ENCODE measurements at regions of chr9 and their contacts with region 1.

Region 1: GRCh38 chr9:121634329-121635261 is 16.8 kb upstream of the DAB2IP start:
- DNase-seq: peak; percentile 46 to 58
- ATAC-seq: peak; percentile 85 to 93
- H3K4me3 ChIP-seq: no peak overlapping the region
- H3K27ac ChIP-seq: peak overlapping the region in 1 of 2 experiments; percentile 37; a peak in 1 of 6 replicates
- H3K4me1 ChIP-seq: peaks cover 23% of the 10 kb centered on the region
- CTCF ChIP-seq: peak; percentile 72
- EP300 ChIP-seq: no peak
- POLR2A ChIP-seq: no peak
- RAD21 ChIP-seq: peak; percentile 81 to 84

Region 2: DNA sequence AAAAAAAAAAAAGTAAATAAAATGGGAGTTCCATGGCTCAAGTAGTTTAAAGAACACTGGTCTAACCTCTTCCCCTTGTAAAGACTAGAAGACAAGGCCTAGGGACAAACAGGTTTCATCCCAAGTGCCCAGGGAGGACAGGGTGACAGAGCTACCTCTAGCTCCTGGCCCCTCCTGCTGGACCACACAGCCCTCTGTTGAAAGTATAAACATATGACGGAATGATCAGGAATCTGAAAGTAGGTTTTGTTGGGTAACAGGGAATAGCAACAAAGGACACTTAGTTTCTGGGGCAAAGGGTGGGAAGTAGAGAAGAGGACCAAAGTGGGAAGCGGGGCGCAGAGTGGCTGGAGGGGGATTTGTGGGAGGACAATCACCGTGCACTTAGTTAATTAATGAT is 50.2 kb before region 1 on chr9:
- CTCF ChIA-PET with region 1: no interaction called
- POLR2A ChIA-PET with region 1: no interaction called
- DNase-seq: no peak
- ATAC-seq: no peak
- H3K4me3 ChIP-seq: no peak overlapping the region
- H3K27ac ChIP-seq: no peak overlapping the region
- H3K4me1 ChIP-seq: no peaks in the 10 kb centered on the region
- CTCF ChIP-seq: no peak
- EP300 ChIP-seq: no peak
- POLR2A ChIP-seq: no peak
- RAD21 ChIP-seq: no peak

Region 3: GRCh38 chr9:121645003-121645402 is 10.4 kb after region 1 on chr9:
- CTCF ChIA-PET with region 1: interaction called, 11 read pairs
- POLR2A ChIA-PET with region 1: no interaction called
- DNase-seq: no peak
- ATAC-seq: 0 out of 6 replicates have a peak, but pooled peaks of 1 of the 2 experiments have one; percentile 11
- H3K4me3 ChIP-seq: no peak overlapping the region
- H3K27ac ChIP-seq: 0 out of 6 replicates have a peak overlapping the region, but pooled peaks of 1 of the 2 experiments have one; percentile 13
- H3K4me1 ChIP-seq: peaks cover 14% of the 10 kb centered on the region
- CTCF ChIP-seq: no peak
- EP300 ChIP-seq: no peak
- POLR2A ChIP-seq: no peak
- RAD21 ChIP-seq: no peak

Region 4: GRCh38 chr9:121658166-121658565 is 23.6 kb after region 1 on chr9:
- CTCF ChIA-PET with region 1: interaction called, 16 read pairs
- POLR2A ChIA-PET with region 1: no interaction called
- DNase-seq: no peak
- ATAC-seq: no peak
- H3K4me3 ChIP-seq: no peak overlapping the region
- H3K27ac ChIP-seq: no peak overlapping the region
- H3K4me1 ChIP-seq: peaks cover 11% of the 10 kb centered on the region
- CTCF ChIP-seq: no peak
- EP300 ChIP-seq: no peak
- POLR2A ChIP-seq: no peak
- RAD21 ChIP-seq: no peak

Region 5: DNA sequence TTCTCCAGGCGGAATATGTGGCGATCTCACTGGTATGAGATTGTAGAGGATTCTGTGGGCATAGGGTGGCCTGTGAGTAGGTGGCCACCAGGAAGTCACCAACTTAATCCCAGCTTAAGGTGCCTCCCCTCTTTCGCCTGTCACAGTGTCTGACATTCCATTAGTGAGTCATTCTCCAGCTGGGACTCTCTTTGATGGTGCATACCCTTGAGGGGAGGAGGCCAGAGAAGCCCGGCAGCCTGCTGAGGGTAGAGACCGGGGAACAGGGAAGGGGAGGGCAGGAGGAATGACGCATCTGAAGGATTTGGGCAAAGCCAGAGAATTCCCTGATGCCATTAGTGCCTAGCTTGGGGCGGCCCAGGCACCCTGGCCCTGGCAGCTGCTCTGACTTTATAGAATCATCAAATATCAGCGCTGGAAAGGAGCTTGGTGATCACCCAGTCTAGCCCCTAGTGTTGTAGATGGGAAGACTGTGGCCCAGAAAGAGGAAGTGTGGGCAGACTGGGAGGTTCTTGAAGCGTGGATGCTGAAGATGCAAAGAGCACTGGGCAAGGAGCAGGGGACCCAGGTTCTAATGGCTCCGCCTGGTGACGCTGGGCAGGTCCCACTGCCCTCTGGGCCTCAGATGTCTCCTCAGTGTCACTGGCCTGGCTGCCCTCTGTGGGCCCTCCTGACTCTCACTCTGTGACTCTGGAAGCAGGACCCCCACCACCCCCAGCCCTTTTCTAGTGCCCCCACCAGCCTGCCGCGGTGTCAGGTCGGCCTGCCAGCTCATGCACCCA is 58.2 kb after region 1 on chr9:
- CTCF ChIA-PET with region 1: interaction called, 42 read pairs
- POLR2A ChIA-PET with region 1: no interaction called
- DNase-seq: peak; percentile 24 to 38
- ATAC-seq: peak; percentile 31 to 45; a peak in 4 of 6 replicates
- H3K4me3 ChIP-seq: no peak overlapping the region
- H3K27ac ChIP-seq: no peak overlapping the region
- H3K4me1 ChIP-seq: peaks cover 13% of the 10 kb centered on the region
- CTCF ChIP-seq: no peak
- EP300 ChIP-seq: no peak
- POLR2A ChIP-seq: no peak
- RAD21 ChIP-seq: no peak

Region 6: DNA sequence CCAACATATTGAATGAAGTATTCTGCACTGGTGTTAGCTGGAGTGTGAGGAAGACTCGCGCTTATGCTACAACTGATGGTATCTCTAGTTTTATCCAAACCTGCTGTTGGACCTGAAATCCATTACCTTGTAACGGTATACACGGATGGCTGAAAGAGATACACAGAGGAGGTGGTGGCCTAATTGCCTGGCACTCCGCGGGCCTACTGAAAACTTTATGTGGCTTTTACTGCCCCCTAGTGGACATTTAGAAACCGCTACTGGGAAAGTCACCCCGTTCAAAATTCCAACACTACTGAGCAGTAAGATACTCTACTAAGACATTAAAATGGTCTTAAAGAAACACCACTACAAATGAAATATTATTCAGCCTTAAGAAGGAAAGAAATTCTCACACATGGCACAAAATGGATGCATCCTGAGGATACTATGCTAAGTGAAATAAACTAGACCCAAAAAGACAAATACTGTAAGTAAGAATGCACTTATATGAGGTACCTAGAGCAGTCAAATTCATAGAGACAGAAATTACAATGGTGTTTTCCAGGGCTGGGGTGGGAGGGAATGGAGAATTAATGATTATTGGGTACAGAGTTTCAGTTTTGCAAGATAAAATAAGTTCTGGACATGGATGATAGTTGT is 358.1 kb after region 1 on chr9:
- CTCF ChIA-PET with region 1: interaction called, 34 read pairs
- POLR2A ChIA-PET with region 1: no interaction called
- DNase-seq: peak; percentile 69 to 74
- ATAC-seq: peak; percentile 90 to 92
- H3K4me3 ChIP-seq: no peak overlapping the region
- H3K27ac ChIP-seq: no peak overlapping the region
- H3K4me1 ChIP-seq: no peaks in the 10 kb centered on the region
- CTCF ChIP-seq: peak; percentile 89
- EP300 ChIP-seq: no peak
- POLR2A ChIP-seq: no peak
- RAD21 ChIP-seq: peak; percentile 85 to 91

Measured in A549 (cell line).